Gastrocnemius medialis (tissue), 4 donors: ENCODE measurements at regions of chr13 and their contacts with region 1.

Region 1: GRCh38 chr13:32538621-32539246 is at the start of gene N4BP2L2:
- DNase-seq: peak; percentile 95
- ATAC-seq: peak; percentile 96 to 98
- H3K4me3 ChIP-seq: peak within 1 kb of the TSS; percentile 77 to 94 (median 90)
- H3K27ac ChIP-seq: peak within 1 kb of the TSS; percentile 88 to 99 (median 97)
- H3K4me1 ChIP-seq: peaks cover 37 to 40% of the 10 kb centered on the region in 2 donors
- H3K27me3 ChIP-seq: no peaks in the 10 kb centered on the region
- CTCF ChIP-seq: peak in 1 of 5 experiments; percentile 36
- POLR2A ChIP-seq: peak; percentile 65 to 79
- total RNA-seq, gene N4BP2L2: 52.2 to 370 (median 176) TPM

Region 2: GRCh38 chr13:31161828-31162590 is 1376.7 kb before region 1 on chr13 and contains the start of gene HSPH1:
- in situ Hi-C with region 1: no loop called
- intact Hi-C with region 1: loop called (anchors 5 kb)
- DNase-seq: peak; percentile 97 to 98
- ATAC-seq: peak; percentile 95 to 96
- H3K4me3 ChIP-seq: peak within 1 kb of the TSS; percentile 82 to 95 (median 93)
- H3K27ac ChIP-seq: peak within 1 kb of the TSS; percentile 84 to 98 (median 96)
- H3K4me1 ChIP-seq: peaks cover 31 to 42% of the 10 kb centered on the region in 2 donors
- H3K27me3 ChIP-seq: no peaks in the 10 kb centered on the region
- CTCF ChIP-seq: peak in 1 of 5 experiments; percentile 28
- POLR2A ChIP-seq: peak; percentile 74 to 93
- total RNA-seq, gene HSPH1: 23.0 to 57.7 (median 30.6) TPM

Region 3: GRCh38 chr13:32315238-32316027 is 223.3 kb before region 1 on chr13 and contains the starts of genes BRCA2 and ZAR1L:
- in situ Hi-C with region 1: no loop called
- intact Hi-C with region 1: loop called (anchors 5 kb)
- DNase-seq: peak; percentile 71 to 78
- ATAC-seq: peak; percentile 94 to 95
- H3K4me3 ChIP-seq: peak within 1 kb of the TSS; percentile 63 to 89 (median 76)
- H3K27ac ChIP-seq: peak within 1 kb of the TSS; percentile 84 to 92 (median 90)
- H3K4me1 ChIP-seq: peaks cover 0 to 3% of the 10 kb centered on the region in 2 donors
- H3K27me3 ChIP-seq: no peaks in the 10 kb centered on the region
- CTCF ChIP-seq: peak in 1 of 5 experiments; percentile 9
- POLR2A ChIP-seq: peak; percentile 54 to 70
- total RNA-seq, gene BRCA2: 0.02 to 0.20 (median 0.12) TPM
- total RNA-seq, gene ZAR1L: not detected

Region 4: GRCh38 chr13:32427852-32428580 is 110.7 kb before region 1 on chr13 and contains the start of gene N4BP2L1:
- in situ Hi-C with region 1: no loop called
- intact Hi-C with region 1: loop called (anchors 2 kb)
- DNase-seq: peak; percentile 59 to 63
- ATAC-seq: peak; percentile 67 to 77
- H3K4me3 ChIP-seq: peak within 1 kb of the TSS; percentile 65 to 96 (median 82)
- H3K27ac ChIP-seq: peak within 1 kb of the TSS; percentile 87 to 96 (median 90)
- H3K4me1 ChIP-seq: peaks cover 17 to 18% of the 10 kb centered on the region in 2 donors
- H3K27me3 ChIP-seq: no peaks in the 10 kb centered on the region
- CTCF ChIP-seq: no peak
- POLR2A ChIP-seq: peak; percentile 82 to 92
- total RNA-seq, gene N4BP2L1: 6.5 to 10.0 (median 7.2) TPM

Region 5: GRCh38 chr13:32639502-32640105 is 100.9 kb after region 1 on chr13:
- in situ Hi-C with region 1: no loop called
- intact Hi-C with region 1: loop called (anchors 5 kb)
- DNase-seq: peak; percentile 26 to 57
- ATAC-seq: peak; percentile 89 to 92
- H3K4me3 ChIP-seq: no peak overlapping the region
- H3K27ac ChIP-seq: no peak overlapping the region
- H3K4me1 ChIP-seq: peaks cover 3 to 24% of the 10 kb centered on the region in 2 donors
- H3K27me3 ChIP-seq: no peaks in the 10 kb centered on the region
- CTCF ChIP-seq: peak; percentile 68 to 85 (median 74)
- POLR2A ChIP-seq: no peak